ENCODE measurements at regions of chr9 and their contacts with region 1.

Region 1: DNA sequence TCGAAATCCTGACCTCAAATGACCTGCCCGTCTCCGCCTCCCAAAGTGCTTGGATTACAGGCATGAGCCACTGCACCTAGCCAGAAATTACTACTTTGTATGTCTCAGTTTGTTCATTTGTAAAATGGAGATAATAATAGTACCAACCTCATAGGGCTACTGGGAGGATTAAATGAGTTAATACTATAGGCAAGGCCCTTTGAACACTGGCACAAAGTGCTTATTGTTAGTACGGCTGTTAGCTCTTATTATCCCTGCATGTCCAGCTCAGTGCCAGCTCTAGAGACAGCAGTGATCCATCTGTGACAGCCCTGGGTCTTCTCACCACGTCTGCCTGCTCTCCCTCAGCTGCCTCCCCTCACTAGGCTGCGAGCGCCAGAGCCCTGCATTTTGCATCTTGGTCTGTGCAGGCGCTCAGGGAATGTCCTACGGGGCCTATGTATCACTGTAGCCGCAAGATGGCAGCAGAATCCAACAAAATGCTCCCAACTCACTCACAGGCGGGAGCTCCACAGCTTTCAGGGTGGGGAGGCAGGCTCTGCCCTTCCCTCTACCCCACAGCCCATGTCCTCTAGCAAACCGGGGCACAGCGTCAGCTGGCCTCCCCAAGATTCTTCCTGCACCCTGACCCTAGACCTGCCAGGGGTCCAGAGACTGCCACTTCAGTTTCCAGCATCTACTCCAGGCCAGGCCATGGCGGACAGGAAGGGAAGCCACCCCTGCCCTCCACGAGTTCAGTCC is 17.7 kb upstream of the AKNA start:
- DNase-seq: peak; percentile 91
- H3K4me3 ChIP-seq: peak overlapping the region in 1 of 2 experiments; percentile 48; a peak in 1 of 4 replicates
- H3K27ac ChIP-seq: no peak overlapping the region
- H3K4me1 ChIP-seq: no peaks in the 10 kb centered on the region
- H3K27me3 ChIP-seq: no peaks in the 10 kb centered on the region
- CTCF ChIP-seq: peak; percentile 86
- EP300 ChIP-seq: no peak
- RAD21 ChIP-seq: peak; percentile 93

Region 2: DNA sequence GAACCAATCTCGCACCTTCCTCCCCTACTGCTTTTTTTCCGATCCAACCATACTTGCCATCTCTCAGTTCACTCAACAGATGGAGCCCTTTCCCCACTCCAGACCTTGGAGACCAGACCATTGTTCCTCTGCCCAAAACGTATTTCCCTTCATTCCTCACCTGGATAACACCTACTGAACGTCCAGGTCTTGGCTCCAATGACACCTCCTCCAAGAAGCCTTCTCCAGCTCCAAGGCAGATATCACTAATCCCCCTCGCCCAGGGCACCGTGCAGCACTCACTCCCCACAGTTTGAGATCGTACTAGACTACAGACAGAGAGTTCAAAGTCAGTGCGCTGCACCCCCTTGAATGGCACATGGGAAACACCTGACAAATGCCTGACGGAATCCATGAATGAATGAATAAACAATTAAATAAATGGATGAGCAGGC is 29.4 kb after region 1 on chr9:
- CTCF ChIA-PET with region 1: interaction called, 29 read pairs
- POLR2A ChIA-PET with region 1: no interaction called
- DNase-seq: peak; percentile 64
- H3K4me3 ChIP-seq: no peak overlapping the region
- H3K27ac ChIP-seq: no peak overlapping the region
- H3K4me1 ChIP-seq: no peaks in the 10 kb centered on the region
- H3K27me3 ChIP-seq: no peaks in the 10 kb centered on the region; the same call in 1 of the 2 replicates
- CTCF ChIP-seq: peak; percentile 71
- EP300 ChIP-seq: no peak
- RAD21 ChIP-seq: peak; percentile 85

Region 3: DNA sequence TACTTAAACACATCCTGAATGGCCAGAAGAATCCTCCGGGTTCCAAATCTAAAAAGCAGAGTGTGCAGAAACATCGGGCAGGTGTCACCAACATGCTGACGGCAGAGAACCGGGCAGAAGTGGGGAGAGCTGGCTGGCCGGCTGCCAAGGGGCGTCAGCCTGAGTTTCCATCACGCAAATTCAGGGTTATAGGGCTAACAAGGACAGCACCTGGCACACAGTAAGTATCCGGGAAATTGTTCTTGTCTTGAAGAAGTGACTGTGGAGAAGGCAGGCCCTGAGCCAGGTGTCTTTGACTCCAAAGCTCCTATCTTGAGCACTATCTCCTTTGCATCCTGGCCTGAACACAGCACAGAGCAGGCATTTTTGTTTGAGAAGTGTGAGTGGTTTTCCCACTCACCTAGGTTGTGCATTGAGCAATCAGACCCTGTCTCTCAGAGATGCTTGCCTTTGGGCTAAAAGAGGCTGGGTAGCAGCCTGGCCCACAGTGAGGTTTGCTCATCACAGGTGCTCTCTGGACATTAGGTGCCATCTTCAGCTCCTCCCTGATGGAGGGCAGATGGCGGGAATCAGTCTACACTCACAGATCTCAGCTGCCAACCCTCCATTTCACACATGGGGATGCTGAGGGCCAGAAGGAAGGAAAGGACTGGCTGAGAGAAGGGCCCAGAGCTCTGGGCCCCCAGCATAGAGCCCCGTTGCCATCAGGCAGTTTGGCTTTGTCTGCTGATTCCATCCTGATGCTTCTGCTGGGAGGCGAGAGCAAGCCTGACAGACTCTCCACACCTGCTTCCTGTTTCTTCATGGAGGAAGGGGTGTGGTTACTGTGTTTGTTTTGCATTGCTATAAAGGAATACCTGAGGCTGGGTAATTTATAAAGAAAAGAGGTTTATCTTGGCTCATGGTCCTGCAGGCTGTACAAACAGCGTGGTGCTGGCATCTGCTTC is 47.0 kb after region 1 on chr9:
- CTCF ChIA-PET with region 1: interaction called, 10 read pairs
- POLR2A ChIA-PET with region 1: no interaction called
- DNase-seq: no peak
- H3K4me3 ChIP-seq: no peak overlapping the region
- H3K27ac ChIP-seq: no peak overlapping the region
- H3K4me1 ChIP-seq: no peaks in the 10 kb centered on the region
- H3K27me3 ChIP-seq: no peaks in the 10 kb centered on the region; the same call in 1 of the 2 replicates
- CTCF ChIP-seq: no peak
- EP300 ChIP-seq: no peak
- RAD21 ChIP-seq: no peak

Region 4: GRCh38 chr9:114653556-114654159 is 248.2 kb after region 1 on chr9:
- CTCF ChIA-PET with region 1: interaction called, 83 read pairs
- POLR2A ChIA-PET with region 1: interaction called, 4 read pairs
- DNase-seq: peak; percentile 69
- H3K4me3 ChIP-seq: no peak overlapping the region; a peak in 1 of 4 replicates
- H3K27ac ChIP-seq: no peak overlapping the region
- H3K4me1 ChIP-seq: peaks cover 0 to 5% of the 10 kb centered on the region in 2 experiments; a peak in 2 of 4 replicates
- H3K27me3 ChIP-seq: no peaks in the 10 kb centered on the region
- CTCF ChIP-seq: peak; percentile 93
- EP300 ChIP-seq: no peak
- RAD21 ChIP-seq: peak; percentile 92

Region 5: GRCh38 chr9:114914139-114914538 is 508.7 kb after region 1 on chr9:
- CTCF ChIA-PET with region 1: interaction called, 17 read pairs
- POLR2A ChIA-PET with region 1: no interaction called
- DNase-seq: no peak
- H3K4me3 ChIP-seq: no peak overlapping the region
- H3K27ac ChIP-seq: no peak overlapping the region
- H3K4me1 ChIP-seq: peaks cover 0 to 12% of the 10 kb centered on the region in 2 experiments; a peak in 3 of 4 replicates
- H3K27me3 ChIP-seq: no peaks in the 10 kb centered on the region; the same call in 1 of the 2 replicates
- CTCF ChIP-seq: peak; percentile 55
- EP300 ChIP-seq: no peak
- RAD21 ChIP-seq: no peak